ENCODE measurements at regions of chr18 and their contacts with region 1.

Region 1: DNA sequence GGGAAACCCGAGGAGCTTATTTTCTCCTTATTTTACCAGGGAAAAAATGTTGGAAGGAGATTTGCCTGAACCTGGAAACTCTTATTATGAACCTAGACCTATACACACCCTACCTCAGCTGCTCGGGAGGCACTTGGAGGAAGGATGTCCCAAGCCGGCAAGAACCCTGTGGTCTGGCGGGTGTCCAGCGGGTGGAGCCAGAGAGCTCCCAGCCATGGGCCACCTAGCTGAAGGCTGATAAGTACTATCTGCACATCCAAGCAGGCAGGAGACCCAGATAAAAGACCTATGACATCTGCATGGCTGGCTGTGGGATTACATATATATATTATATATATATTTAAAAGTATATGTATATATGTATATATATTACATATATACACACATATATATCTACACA is 1.1 kb upstream of the SLC14A1 start:
- DNase-seq: peak; percentile 21
- ATAC-seq: peak; percentile 98
- H3K4me3 ChIP-seq: no peak overlapping the region
- H3K27ac ChIP-seq: no peak overlapping the region
- H3K4me1 ChIP-seq: no peaks in the 10 kb centered on the region
- H3K27me3 ChIP-seq: no peaks in the 10 kb centered on the region; a peak in 1 of 5 replicates
- CTCF ChIP-seq: peak; percentile 83
- EP300 ChIP-seq: no peak
- POLR2A ChIP-seq: no peak
- RAD21 ChIP-seq: peak; percentile 51; the same call in 1 of the 2 replicates

Region 2: GRCh38 chr18:45839414-45840395 is 116.8 kb after region 1 on chr18:
- CTCF ChIA-PET with region 1: no interaction called
- POLR2A ChIA-PET with region 1: no interaction called
- in situ Hi-C with region 1: no loop called
- intact Hi-C with region 1: loop called (anchors 5 kb)
- DNase-seq: peak; percentile 23
- ATAC-seq: peak; percentile 82
- H3K4me3 ChIP-seq: no peak overlapping the region
- H3K27ac ChIP-seq: no peak overlapping the region
- H3K4me1 ChIP-seq: peaks cover 22% of the 10 kb centered on the region
- H3K27me3 ChIP-seq: peaks cover 1 to 3% of the 10 kb centered on the region in 2 experiments; a peak in 2 of 5 replicates
- CTCF ChIP-seq: peak; percentile 45
- EP300 ChIP-seq: no peak
- POLR2A ChIP-seq: no peak
- RAD21 ChIP-seq: no peak

Region 3: GRCh38 chr18:45863469-45863868 is 140.6 kb after region 1 on chr18:
- CTCF ChIA-PET with region 1: no interaction called
- POLR2A ChIA-PET with region 1: no interaction called
- in situ Hi-C with region 1: no loop called
- intact Hi-C with region 1: no loop called
- DNase-seq: no peak
- ATAC-seq: no peak
- H3K4me3 ChIP-seq: no peak overlapping the region
- H3K27ac ChIP-seq: no peak overlapping the region
- H3K4me1 ChIP-seq: no peaks in the 10 kb centered on the region
- H3K27me3 ChIP-seq: no peaks in the 10 kb centered on the region
- CTCF ChIP-seq: no peak
- EP300 ChIP-seq: no peak
- POLR2A ChIP-seq: no peak
- RAD21 ChIP-seq: no peak

Region 4: GRCh38 chr18:45879681-45880655 is 157.1 kb after region 1 on chr18:
- CTCF ChIA-PET with region 1: interaction called, 10 read pairs
- POLR2A ChIA-PET with region 1: no interaction called
- in situ Hi-C with region 1: no loop called
- intact Hi-C with region 1: loop called (anchors 10 kb)
- DNase-seq: peak; percentile 34
- ATAC-seq: peak; percentile 100
- H3K4me3 ChIP-seq: no peak overlapping the region
- H3K27ac ChIP-seq: no peak overlapping the region
- H3K4me1 ChIP-seq: no peaks in the 10 kb centered on the region
- H3K27me3 ChIP-seq: no peaks in the 10 kb centered on the region
- CTCF ChIP-seq: peak; percentile 90
- EP300 ChIP-seq: no peak
- POLR2A ChIP-seq: no peak
- RAD21 ChIP-seq: peak; percentile 73

Region 5: DNA sequence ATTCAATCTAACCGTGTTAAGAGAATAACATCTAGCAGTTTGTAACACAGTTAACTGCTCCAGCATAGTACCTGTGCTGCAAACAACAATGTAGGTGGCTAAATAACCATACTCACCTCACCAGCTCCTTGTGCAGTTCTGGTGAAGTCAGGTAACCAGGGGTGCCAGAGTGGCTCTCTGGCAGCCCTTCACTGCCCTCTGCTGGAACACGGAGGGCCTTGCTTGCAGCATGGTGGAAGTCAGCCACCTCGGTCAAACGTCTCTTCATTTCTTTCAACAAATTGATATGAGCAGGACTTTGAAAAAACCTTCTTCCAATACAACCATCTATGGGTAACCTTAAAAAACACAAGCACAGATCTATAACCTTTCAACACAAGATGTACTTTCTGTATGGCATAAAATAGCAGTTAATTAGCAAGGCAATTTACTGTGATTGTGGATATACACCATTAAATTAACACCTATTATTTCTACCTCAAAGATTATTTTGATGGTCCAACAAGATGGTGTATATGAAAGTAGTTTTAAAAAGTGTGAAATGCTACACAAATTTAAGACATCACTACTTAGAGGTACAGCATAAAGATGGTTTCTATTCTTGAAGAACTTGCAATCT is 187.6 kb after region 1 on chr18:
- CTCF ChIA-PET with region 1: no interaction called
- POLR2A ChIA-PET with region 1: no interaction called
- in situ Hi-C with region 1: no loop called
- intact Hi-C with region 1: loop called (anchors 1 kb)
- DNase-seq: peak; percentile 44
- ATAC-seq: peak; percentile 94
- H3K4me3 ChIP-seq: no peak overlapping the region
- H3K27ac ChIP-seq: no peak overlapping the region
- H3K4me1 ChIP-seq: no peaks in the 10 kb centered on the region
- H3K27me3 ChIP-seq: no peaks in the 10 kb centered on the region
- CTCF ChIP-seq: peak; percentile 84
- EP300 ChIP-seq: no peak
- POLR2A ChIP-seq: no peak
- RAD21 ChIP-seq: peak; percentile 49; the same call in 1 of the 2 replicates

Region 6: GRCh38 chr18:45951016-45951714 is 228.3 kb after region 1 on chr18:
- CTCF ChIA-PET with region 1: no interaction called
- POLR2A ChIA-PET with region 1: no interaction called
- in situ Hi-C with region 1: no loop called
- intact Hi-C with region 1: no loop called
- DNase-seq: no peak
- ATAC-seq: no peak
- H3K4me3 ChIP-seq: no peak overlapping the region
- H3K27ac ChIP-seq: no peak overlapping the region
- H3K4me1 ChIP-seq: no peaks in the 10 kb centered on the region
- H3K27me3 ChIP-seq: no peaks in the 10 kb centered on the region
- CTCF ChIP-seq: no peak
- EP300 ChIP-seq: no peak
- POLR2A ChIP-seq: no peak
- RAD21 ChIP-seq: no peak